Heart left ventricle (tissue), 16 donors: ENCODE measurements at regions of chr2 and their contacts with region 1.

Region 1: GRCh38 chr2:28452534-28453081 is 43.3 kb upstream of the PLB1 start:
- DNase-seq: peak; percentile 58 to 89 (median 72)
- ATAC-seq: peak; percentile 59 to 91 (median 84)
- H3K4me3 ChIP-seq: no peak overlapping the region
- H3K27ac ChIP-seq: no peak overlapping the region
- H3K4me1 ChIP-seq: peaks cover 0 to 35% (median 0%) of the 10 kb centered on the region in 12 donors
- H3K27me3 ChIP-seq: no peaks in the 10 kb centered on the region
- CTCF ChIP-seq: peak; percentile 81 to 93 (median 87)
- POLR2A ChIP-seq: no peak

Region 2: DNA sequence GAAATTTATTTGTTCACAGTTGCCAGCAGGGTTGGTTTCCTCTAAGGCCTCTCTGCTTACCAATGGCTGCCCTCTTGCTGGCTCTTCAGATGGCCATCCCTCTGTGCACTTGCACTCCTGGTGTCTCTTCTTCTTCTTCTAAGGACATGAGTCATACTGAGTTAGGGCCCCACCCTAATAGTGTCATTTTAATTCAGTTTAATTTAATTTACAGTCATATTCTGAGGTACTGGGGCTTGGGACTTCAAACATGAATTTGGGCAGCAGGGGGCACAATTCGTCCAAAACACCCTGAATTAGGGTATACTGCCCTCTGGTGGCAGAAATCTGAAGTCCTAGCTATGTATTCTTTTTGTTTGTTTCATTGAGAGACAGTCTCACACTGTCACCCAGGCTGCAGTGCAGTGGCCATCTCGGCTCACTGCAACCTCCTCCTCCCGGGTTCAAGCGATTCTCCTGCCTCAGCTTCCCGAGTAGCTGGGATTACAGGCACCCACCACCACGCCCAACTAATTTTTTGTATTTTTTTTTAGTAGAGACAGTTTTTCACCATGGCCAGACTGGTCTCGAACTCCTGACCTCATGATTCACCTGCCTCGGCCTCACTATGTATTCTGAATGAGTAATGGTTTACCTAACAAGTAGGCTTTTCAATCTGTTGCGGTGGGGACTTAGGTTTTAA is 769.1 kb before region 1 on chr2:
- intact Hi-C with region 1: loop called in 2 of 10 experiments (anchors 5 kb)
- DNase-seq: peak in 4 of 5 donors; percentile 54 to 78 (median 76)
- ATAC-seq: peak; percentile 60 to 85 (median 82)
- H3K4me3 ChIP-seq: no peak overlapping the region
- H3K27ac ChIP-seq: no peak overlapping the region
- H3K4me1 ChIP-seq: peaks cover 0 to 30% (median 0%) of the 10 kb centered on the region in 12 donors
- H3K27me3 ChIP-seq: no peaks in the 10 kb centered on the region
- CTCF ChIP-seq: peak; percentile 91 to 99 (median 96)
- POLR2A ChIP-seq: no peak

Region 3: DNA sequence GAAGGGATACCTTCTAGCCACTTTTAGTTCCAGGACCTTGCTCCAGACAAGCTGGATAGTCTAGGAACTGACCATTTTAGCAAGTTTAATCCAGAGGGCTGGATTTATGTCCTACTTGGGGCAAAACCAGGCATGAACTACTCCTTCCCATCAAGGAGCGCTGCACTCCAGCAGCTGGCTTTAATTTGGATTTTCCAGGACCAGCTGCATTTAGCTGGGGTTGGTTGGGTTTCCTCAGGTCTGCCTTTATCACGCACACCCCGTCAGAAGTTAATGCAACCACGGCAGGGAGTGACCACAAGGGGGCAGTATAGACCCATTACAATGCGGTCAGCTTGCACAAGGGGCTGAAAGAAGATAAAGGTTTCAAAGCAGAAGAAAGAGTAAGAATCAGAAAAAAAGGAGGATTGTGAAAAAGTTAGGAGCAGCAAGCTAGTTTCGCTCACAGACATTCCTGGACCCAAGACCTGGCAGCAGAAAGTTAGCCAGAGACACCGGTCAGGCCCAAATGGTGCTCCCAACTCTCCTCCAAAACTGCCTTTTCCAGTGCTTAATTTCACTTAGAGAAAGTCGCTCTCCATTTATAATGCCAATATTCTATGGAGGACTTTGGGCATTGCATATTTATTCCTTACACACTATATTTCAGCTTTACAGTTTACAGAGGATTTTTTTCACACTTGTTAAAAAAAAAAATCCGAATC is 748.8 kb before region 1 on chr2:
- intact Hi-C with region 1: loop called (anchors 1 to 10 kb)
- DNase-seq: peak; percentile 74 to 83 (median 79)
- ATAC-seq: peak; percentile 48 to 66 (median 56)
- H3K4me3 ChIP-seq: no peak overlapping the region
- H3K27ac ChIP-seq: peak overlapping the region in 2 of 12 donors; percentile 8 to 82
- H3K4me1 ChIP-seq: peaks cover 0 to 42% (median 26%) of the 10 kb centered on the region in 12 donors
- H3K27me3 ChIP-seq: no peaks in the 10 kb centered on the region
- CTCF ChIP-seq: peak; percentile 89 to 97 (median 94)
- POLR2A ChIP-seq: no peak

Region 4: DNA sequence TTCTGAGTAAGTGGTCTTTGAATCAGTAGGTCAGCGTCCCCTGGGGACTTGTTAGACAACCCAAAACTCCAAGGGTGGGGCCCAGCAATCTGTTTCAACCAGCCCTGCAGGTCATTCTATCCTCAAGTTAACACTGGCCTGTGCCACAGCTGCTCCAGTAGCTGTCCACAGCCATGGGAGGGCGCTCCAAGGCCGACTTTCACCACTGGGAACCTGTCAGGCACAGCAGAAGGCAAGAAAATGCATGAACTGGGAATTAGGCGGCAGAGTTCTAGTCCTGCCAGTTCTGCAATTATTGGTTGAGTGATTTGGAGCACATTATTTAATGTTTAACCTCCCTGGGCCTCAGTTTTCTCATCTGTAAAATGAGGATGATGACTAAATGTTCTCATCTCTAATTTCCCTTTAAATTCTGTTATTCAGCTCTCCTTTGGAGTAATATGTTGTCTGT is 698.4 kb before region 1 on chr2:
- intact Hi-C with region 1: loop called in 9 of 10 experiments (anchors 1 to 10 kb)
- DNase-seq: peak; percentile 75 to 91 (median 82)
- ATAC-seq: peak; percentile 69 to 86 (median 84)
- H3K4me3 ChIP-seq: no peak overlapping the region
- H3K27ac ChIP-seq: no peak overlapping the region
- H3K4me1 ChIP-seq: peaks cover 0 to 32% (median 3%) of the 10 kb centered on the region in 12 donors
- H3K27me3 ChIP-seq: no peaks in the 10 kb centered on the region
- CTCF ChIP-seq: peak; percentile 73 to 90 (median 81)
- POLR2A ChIP-seq: no peak

Region 5: DNA sequence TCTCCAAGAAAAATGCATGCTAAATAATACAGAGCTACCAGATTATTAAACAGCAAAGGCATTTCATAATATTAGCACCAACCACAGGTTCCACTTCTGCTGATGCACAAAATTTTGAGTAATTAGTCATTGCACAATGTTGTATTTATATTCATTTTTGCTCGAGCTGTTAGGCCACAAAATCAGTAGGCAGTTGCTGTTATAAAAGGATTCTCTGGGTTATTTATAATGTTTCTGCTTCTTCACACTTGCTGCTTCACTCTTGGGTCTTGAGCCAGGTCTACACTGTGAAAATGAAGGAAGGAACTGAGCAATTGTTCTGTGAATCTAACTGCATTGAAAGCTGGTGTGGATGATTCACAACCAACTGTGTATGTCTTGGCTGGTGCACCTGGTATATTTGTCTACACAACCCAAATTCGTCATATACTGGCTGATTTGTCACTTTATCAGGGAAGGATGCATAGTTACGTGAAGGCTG is 642.8 kb before region 1 on chr2:
- intact Hi-C with region 1: loop called in 1 of 10 experiments (anchors 10 kb)
- DNase-seq: no peak
- ATAC-seq: no peak
- H3K4me3 ChIP-seq: no peak overlapping the region
- H3K27ac ChIP-seq: peak overlapping the region in 1 of 12 donors; percentile 19
- H3K4me1 ChIP-seq: peaks cover 0 to 24% (median 0%) of the 10 kb centered on the region in 12 donors
- H3K27me3 ChIP-seq: no peaks in the 10 kb centered on the region
- CTCF ChIP-seq: no peak
- POLR2A ChIP-seq: no peak

Region 6: DNA sequence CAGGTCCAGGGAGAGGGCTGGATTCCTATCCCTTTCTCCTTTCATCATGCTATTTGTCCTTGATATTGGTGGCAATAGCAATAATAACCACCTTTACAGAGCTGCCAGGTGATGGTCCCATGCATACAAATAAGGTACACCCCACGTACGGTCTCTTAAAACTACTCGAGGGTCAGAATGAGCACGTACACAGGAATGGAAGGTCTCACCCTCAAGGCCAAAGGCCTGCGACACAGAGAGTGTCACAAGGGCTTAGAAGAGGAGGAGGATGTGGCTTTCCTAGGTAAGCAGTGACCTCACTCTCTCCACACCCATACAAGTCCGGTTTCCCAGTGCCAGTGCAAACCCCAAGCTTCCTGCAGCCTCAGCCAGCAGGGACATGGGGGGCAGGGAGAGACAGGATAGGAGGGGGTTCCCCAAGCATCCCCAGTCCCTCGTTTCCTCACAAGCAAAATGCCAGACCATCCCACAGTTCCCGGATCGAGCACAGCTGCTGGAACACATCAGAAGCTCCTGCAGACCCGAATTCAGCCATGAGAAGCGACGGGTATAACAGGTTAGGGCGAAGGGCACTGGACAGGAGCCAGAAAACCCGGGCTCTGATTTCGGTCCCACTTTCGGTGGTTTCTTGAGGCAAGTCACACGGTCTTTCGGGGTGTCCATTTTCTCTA is 92.4 kb after region 1 on chr2:
- intact Hi-C with region 1: no loop called
- DNase-seq: no peak
- ATAC-seq: peak in 2 of 4 donors; percentile 25 to 61
- H3K4me3 ChIP-seq: no peak overlapping the region
- H3K27ac ChIP-seq: no peak overlapping the region
- H3K4me1 ChIP-seq: peaks cover 0 to 16% (median 0%) of the 10 kb centered on the region in 12 donors
- H3K27me3 ChIP-seq: no peaks in the 10 kb centered on the region
- CTCF ChIP-seq: no peak
- POLR2A ChIP-seq: no peak